Gastrocnemius medialis (tissue), 4 donors: ENCODE measurements at regions of chr9 and their contacts with region 1.

Region 1: GRCh38 chr9:123929870-123930831 is at the start of gene DENND1A:
- DNase-seq: peak; percentile 82 to 86
- ATAC-seq: peak; percentile 91 to 93
- H3K4me3 ChIP-seq: peak within 1 kb of the TSS; percentile 56 to 92 (median 65)
- H3K27ac ChIP-seq: peak within 1 kb of the TSS; percentile 72 to 84 (median 76)
- H3K4me1 ChIP-seq: peaks cover 29 to 30% of the 10 kb centered on the region in 2 donors
- H3K27me3 ChIP-seq: no peaks in the 10 kb centered on the region
- CTCF ChIP-seq: no peak
- POLR2A ChIP-seq: peak; percentile 58 to 73
- total RNA-seq, gene DENND1A: 14.1 to 24.6 (median 16.4) TPM

Region 2: GRCh38 chr9:123268240-123268949 is 661.8 kb before region 1 on chr9 and contains the start of gene STRBP:
- in situ Hi-C with region 1: no loop called
- intact Hi-C with region 1: loop called (anchors 10 kb)
- DNase-seq: peak; percentile 84 to 86
- ATAC-seq: peak; percentile 87 to 89
- H3K4me3 ChIP-seq: peak within 1 kb of the TSS; percentile 64 to 93 (median 74)
- H3K27ac ChIP-seq: peak within 1 kb of the TSS; percentile 70 to 86 (median 82)
- H3K4me1 ChIP-seq: no peaks in the 10 kb centered on the region
- H3K27me3 ChIP-seq: no peaks in the 10 kb centered on the region
- CTCF ChIP-seq: peak in 3 of 5 experiments; percentile 15 to 30 (median 22)
- POLR2A ChIP-seq: peak; percentile 44 to 57
- total RNA-seq, gene STRBP: 5.0 to 25.0 (median 13.2) TPM

Region 3: DNA sequence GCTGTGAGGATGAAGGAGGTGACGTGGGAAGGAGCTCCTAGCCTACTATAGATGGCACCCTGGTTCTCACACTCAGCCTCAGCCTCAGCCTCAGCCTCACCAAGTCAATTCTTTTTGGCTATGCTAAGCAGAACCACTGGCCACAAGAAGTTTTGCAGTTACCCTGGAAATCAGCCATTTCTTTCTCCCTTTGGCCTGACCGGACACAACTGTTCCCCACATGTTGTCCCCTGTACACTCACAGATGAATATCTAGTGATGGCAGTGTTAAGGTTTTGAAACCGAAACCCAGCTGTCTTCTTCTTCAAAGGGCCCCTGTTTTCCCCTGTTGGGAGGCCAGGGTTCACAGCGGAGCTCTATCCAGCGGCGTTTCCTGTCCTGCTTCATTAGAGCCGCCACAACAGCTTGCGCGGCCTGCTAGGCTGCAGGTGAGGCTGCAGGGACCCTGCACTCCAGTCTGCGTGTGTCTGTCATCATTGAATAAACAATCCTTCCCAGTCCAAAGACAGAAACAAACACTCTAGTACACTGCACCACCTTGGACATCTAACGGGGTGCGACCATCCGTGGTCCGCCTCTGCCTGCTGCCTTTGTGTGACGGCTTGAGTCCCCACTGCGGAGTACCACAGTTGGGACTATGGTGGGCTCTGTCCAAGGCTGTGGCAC is 250.7 kb before region 1 on chr9:
- in situ Hi-C with region 1: no loop called
- intact Hi-C with region 1: no loop called
- DNase-seq: no peak
- ATAC-seq: no peak
- H3K4me3 ChIP-seq: no peak overlapping the region
- H3K27ac ChIP-seq: no peak overlapping the region
- H3K4me1 ChIP-seq: no peaks in the 10 kb centered on the region
- H3K27me3 ChIP-seq: no peaks in the 10 kb centered on the region
- CTCF ChIP-seq: no peak
- POLR2A ChIP-seq: no peak

Region 4: GRCh38 chr9:123749580-123750202 is 180.5 kb before region 1 on chr9:
- in situ Hi-C with region 1: no loop called
- intact Hi-C with region 1: loop called (anchors 10 kb)
- DNase-seq: no peak
- ATAC-seq: no peak
- H3K4me3 ChIP-seq: no peak overlapping the region
- H3K27ac ChIP-seq: no peak overlapping the region
- H3K4me1 ChIP-seq: peaks cover 8 to 15% of the 10 kb centered on the region in 2 donors
- H3K27me3 ChIP-seq: no peaks in the 10 kb centered on the region
- CTCF ChIP-seq: no peak
- POLR2A ChIP-seq: no peak

Region 5: GRCh38 chr9:124415102-124415851 is 485.1 kb after region 1 on chr9 and contains the start of gene PSMB7:
- in situ Hi-C with region 1: no loop called
- intact Hi-C with region 1: loop called (anchors 10 kb)
- DNase-seq: peak; percentile 90 to 95
- ATAC-seq: peak; percentile 96 to 97
- H3K4me3 ChIP-seq: peak within 1 kb of the TSS; percentile 85 to 94 (median 88)
- H3K27ac ChIP-seq: peak within 1 kb of the TSS; percentile 86 to 90 (median 88)
- H3K4me1 ChIP-seq: peaks cover 16 to 18% of the 10 kb centered on the region in 2 donors
- H3K27me3 ChIP-seq: no peaks in the 10 kb centered on the region
- CTCF ChIP-seq: peak; percentile 72 to 93 (median 84)
- POLR2A ChIP-seq: peak; percentile 83 to 94
- total RNA-seq, gene PSMB7: 265 to 438 (median 354) TPM